ENCODE measurements at regions of chr10 and their contacts with region 1.

Region 1: DNA sequence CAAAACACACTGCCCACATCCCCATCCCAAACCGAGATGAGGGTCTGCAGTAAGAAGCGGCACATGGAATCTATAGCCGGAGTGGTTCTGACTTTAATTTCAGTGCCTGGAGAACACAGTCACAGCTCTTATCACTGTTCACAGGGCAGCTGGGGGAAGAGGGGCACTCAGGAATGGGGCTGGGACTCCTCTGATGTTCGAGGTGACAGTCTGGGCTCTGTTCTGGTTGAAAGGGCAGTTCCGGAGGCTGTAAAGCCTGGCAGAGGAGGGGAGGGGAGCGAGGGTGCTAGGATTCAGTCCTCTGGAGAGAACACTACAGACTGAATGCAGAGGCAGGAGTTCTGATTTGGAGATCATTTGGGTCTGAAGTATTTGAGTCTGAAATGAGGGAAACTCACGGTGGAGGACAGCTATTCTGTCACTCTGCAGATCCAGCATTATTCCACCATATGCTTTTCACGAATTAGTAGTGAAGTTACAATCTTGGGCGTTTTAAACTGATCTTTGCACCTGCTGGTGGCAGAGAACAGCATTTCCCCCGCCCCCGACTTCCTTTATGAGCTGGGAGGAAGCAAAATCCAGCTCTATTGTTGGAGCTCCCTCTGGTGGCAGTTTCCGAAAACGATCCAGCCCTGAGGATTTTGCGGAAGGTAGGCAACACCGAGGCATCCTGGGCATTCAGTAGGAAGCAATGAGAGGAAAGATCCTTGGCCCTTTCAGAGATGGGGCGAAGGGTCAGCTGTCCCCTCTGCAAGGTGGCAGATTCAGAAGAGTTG is 22.7 kb upstream of the KCNK18 start:
- DNase-seq: peak; percentile 65 to 90 (median 84)
- H3K4me3 ChIP-seq: peak overlapping the region; percentile 38 to 82 (median 65)
- H3K27ac ChIP-seq: peak overlapping the region in 41 of 59 donors; percentile 4 to 80 (median 50)
- H3K27me3 ChIP-seq: peaks cover 0 to 37% (median 11%) of the 10 kb centered on the region in 45 donors
- CTCF ChIP-seq: peak; percentile 72 to 97 (median 88)

Region 2: GRCh38 chr10:116444527-116445142 is 730.0 kb before region 1 on chr10:
- intact Hi-C with region 1: loop called in 1 of 2 experiments (anchors 10 kb)
- DNase-seq: no peak
- H3K4me3 ChIP-seq: no peak overlapping the region
- H3K27ac ChIP-seq: no peak overlapping the region
- H3K27me3 ChIP-seq: peaks cover 0 to 6% (median 0%) of the 10 kb centered on the region in 45 donors
- CTCF ChIP-seq: peak; percentile 63 to 88 (median 77)

Region 3: DNA sequence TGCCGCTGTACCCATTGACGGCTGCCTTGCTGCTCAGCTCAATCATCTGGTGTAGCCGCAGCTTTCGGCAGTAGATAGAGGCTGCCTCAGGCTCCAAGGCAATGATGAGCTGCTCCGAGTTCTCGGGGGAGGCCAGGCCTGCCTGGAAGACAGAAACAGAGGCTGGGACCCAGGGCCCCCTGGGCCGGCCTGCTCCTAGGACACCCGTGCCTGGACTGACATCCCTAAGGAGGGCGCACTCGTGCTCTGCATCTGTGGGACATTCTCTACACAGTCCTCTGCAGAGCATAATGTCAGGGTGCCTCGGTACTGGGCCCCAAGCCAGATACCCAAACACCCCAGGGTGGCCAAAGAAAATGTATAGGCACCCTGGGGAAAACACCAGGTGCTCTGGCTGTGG is 490.8 kb before region 1 on chr10:
- intact Hi-C with region 1: loop called (anchors 5 kb)
- DNase-seq: no peak
- H3K4me3 ChIP-seq: no peak overlapping the region
- H3K27ac ChIP-seq: peak overlapping the region in 1 of 59 donors; percentile 2
- H3K27me3 ChIP-seq: no peaks in the 10 kb centered on the region
- CTCF ChIP-seq: no peak

Region 4: GRCh38 chr10:116690356-116691322 is 484.0 kb before region 1 on chr10:
- intact Hi-C with region 1: loop called in 1 of 2 experiments (anchors 5 kb)
- DNase-seq: peak in 9 of 10 donors; percentile 14 to 83 (median 68)
- H3K4me3 ChIP-seq: peak overlapping the region in 2 of 59 donors; percentile 8 to 16
- H3K27ac ChIP-seq: peak overlapping the region in 47 of 59 donors; percentile 1 to 85 (median 55)
- H3K27me3 ChIP-seq: no peaks in the 10 kb centered on the region
- CTCF ChIP-seq: peak; percentile 39 to 78 (median 66)

Region 5: GRCh38 chr10:116796910-116797513 is 377.6 kb before region 1 on chr10:
- intact Hi-C with region 1: loop called (anchors 1 to 2 kb)
- DNase-seq: peak; percentile 70 to 84 (median 80)
- H3K4me3 ChIP-seq: no peak overlapping the region
- H3K27ac ChIP-seq: no peak overlapping the region
- H3K27me3 ChIP-seq: peaks cover 0 to 4% (median 0%) of the 10 kb centered on the region in 45 donors
- CTCF ChIP-seq: peak; percentile 89 to 100 (median 97)

Region 6: DNA sequence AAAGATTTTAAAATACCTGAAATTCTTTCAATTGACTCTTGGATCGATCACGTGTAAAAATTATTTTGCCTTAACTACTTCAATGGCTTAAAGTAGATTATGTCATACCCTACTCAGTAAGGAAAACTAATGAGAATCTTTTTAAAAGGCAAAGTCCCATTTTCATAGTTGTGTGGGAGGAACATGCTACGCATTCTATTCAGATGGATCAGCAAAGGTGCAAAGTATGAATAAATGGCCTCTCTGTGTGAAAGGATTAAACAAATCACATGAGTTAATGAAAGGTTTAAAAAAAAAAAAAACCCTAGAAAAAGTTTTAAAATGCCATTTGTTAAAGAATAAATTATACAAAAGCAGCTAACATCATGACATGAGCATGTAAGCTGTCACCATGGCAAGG is 248.2 kb before region 1 on chr10:
- intact Hi-C with region 1: no loop called
- DNase-seq: no peak
- H3K4me3 ChIP-seq: no peak overlapping the region
- H3K27ac ChIP-seq: peak overlapping the region in 9 of 59 donors; percentile 10 to 42 (median 16)
- H3K27me3 ChIP-seq: no peaks in the 10 kb centered on the region
- CTCF ChIP-seq: no peak

Region 7: GRCh38 chr10:117492504-117492903 is 317.9 kb after region 1 on chr10:
- intact Hi-C with region 1: no loop called
- DNase-seq: no peak
- H3K4me3 ChIP-seq: no peak overlapping the region
- H3K27ac ChIP-seq: no peak overlapping the region
- H3K27me3 ChIP-seq: peaks cover 0 to 31% (median 0%) of the 10 kb centered on the region in 45 donors
- CTCF ChIP-seq: no peak

Measured in dorsolateral prefrontal cortex (tissue), 120 donors.